ENCODE measurements at regions of chr1 and their contacts with region 1.

Region 1: DNA sequence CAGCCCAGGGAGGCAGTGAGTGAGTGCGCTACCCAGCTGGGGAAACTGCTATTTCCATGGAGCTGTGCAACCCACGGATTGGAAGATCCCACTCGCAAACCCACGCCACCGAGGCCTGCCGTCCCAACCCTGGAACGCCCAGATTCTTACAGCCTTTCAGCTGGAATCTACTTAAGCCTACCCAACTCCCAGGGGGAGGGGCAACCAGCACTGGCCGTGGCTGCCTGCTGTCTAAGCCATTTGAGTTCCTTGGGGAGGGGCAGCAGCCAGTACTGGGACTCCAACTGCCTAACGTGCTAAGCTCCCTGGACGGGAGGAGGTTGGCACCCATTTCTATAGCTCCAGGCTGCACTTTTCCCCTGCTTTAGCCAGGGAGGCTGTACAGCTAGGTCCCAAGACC is 27.1 kb upstream of the ZNF669 start:
- DNase-seq: no peak
- ATAC-seq: no peak
- H3K4me3 ChIP-seq: no peak overlapping the region
- H3K27ac ChIP-seq: no peak overlapping the region
- H3K4me1 ChIP-seq: no peaks in the 10 kb centered on the region
- H3K27me3 ChIP-seq: no peaks in the 10 kb centered on the region
- CTCF ChIP-seq: no peak
- EP300 ChIP-seq: no peak
- POLR2A ChIP-seq: no peak
- RAD21 ChIP-seq: no peak

Region 2: DNA sequence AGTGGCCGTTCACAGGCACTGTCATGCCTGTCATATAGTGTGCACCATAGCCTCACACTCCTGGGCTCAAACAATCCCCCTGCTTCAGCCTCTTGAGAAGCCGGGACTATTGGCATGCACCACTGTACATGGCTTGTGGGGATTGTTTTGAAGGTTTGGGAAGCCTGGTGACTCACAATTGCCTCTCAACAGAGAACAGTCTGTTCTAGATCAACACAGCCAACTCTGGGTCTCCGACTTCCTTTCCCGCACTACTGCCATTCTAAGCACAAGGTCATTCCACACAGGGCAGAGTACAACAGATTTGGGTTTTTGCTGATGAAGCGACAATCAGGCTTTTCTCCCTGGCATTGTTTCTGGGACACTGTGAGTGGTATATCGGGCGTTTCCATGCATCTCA is 184.0 kb before region 1 on chr1:
- CTCF ChIA-PET with region 1: no interaction called
- POLR2A ChIA-PET with region 1: no interaction called
- RAD21 ChIA-PET with region 1: no interaction called
- SMC1A ChIA-PET with region 1: no interaction called
- in situ Hi-C with region 1: no loop called
- intact Hi-C with region 1: no loop called
- DNase-seq: no peak
- ATAC-seq: no peak
- H3K4me3 ChIP-seq: no peak overlapping the region
- H3K27ac ChIP-seq: no peak overlapping the region
- H3K4me1 ChIP-seq: no peaks in the 10 kb centered on the region
- H3K27me3 ChIP-seq: no peaks in the 10 kb centered on the region
- CTCF ChIP-seq: no peak
- EP300 ChIP-seq: no peak
- POLR2A ChIP-seq: no peak
- RAD21 ChIP-seq: no peak

Region 3: GRCh38 chr1:247043406-247043805 is 87.8 kb before region 1 on chr1:
- CTCF ChIA-PET with region 1: no interaction called
- POLR2A ChIA-PET with region 1: no interaction called
- RAD21 ChIA-PET with region 1: no interaction called
- SMC1A ChIA-PET with region 1: no interaction called
- in situ Hi-C with region 1: no loop called
- intact Hi-C with region 1: no loop called
- DNase-seq: no peak
- ATAC-seq: no peak
- H3K4me3 ChIP-seq: no peak overlapping the region
- H3K27ac ChIP-seq: no peak overlapping the region
- H3K4me1 ChIP-seq: no peaks in the 10 kb centered on the region
- H3K27me3 ChIP-seq: no peaks in the 10 kb centered on the region
- CTCF ChIP-seq: no peak
- EP300 ChIP-seq: no peak
- POLR2A ChIP-seq: no peak
- RAD21 ChIP-seq: no peak

Region 4: GRCh38 chr1:247172996-247173395 is 41.8 kb after region 1 on chr1:
- CTCF ChIA-PET with region 1: no interaction called
- POLR2A ChIA-PET with region 1: no interaction called
- RAD21 ChIA-PET with region 1: interaction called, 4 read pairs
- SMC1A ChIA-PET with region 1: interaction called, 4 read pairs
- in situ Hi-C with region 1: no loop called
- intact Hi-C with region 1: loop called (anchors 2 kb)
- DNase-seq: peak; percentile 19
- ATAC-seq: no peak
- H3K4me3 ChIP-seq: no peak overlapping the region
- H3K27ac ChIP-seq: no peak overlapping the region
- H3K4me1 ChIP-seq: no peaks in the 10 kb centered on the region
- H3K27me3 ChIP-seq: no peaks in the 10 kb centered on the region
- CTCF ChIP-seq: no peak
- EP300 ChIP-seq: no peak
- POLR2A ChIP-seq: no peak
- RAD21 ChIP-seq: no peak

Region 5: GRCh38 chr1:247287460-247287859 is 156.2 kb after region 1 on chr1:
- CTCF ChIA-PET with region 1: no interaction called
- POLR2A ChIA-PET with region 1: no interaction called
- RAD21 ChIA-PET with region 1: no interaction called
- SMC1A ChIA-PET with region 1: no interaction called
- in situ Hi-C with region 1: no loop called
- intact Hi-C with region 1: no loop called
- DNase-seq: no peak
- ATAC-seq: no peak
- H3K4me3 ChIP-seq: no peak overlapping the region
- H3K27ac ChIP-seq: no peak overlapping the region
- H3K4me1 ChIP-seq: no peaks in the 10 kb centered on the region
- H3K27me3 ChIP-seq: no peaks in the 10 kb centered on the region
- CTCF ChIP-seq: no peak
- EP300 ChIP-seq: no peak
- POLR2A ChIP-seq: no peak
- RAD21 ChIP-seq: no peak